Left colon (tissue), 2 donors: ENCODE measurements at regions of chr22 and their contacts with region 1.

Region 1: GRCh38 chr22:20867179-20868024 is 8.6 kb downstream of the SNAP29 start:
- DNase-seq: peak; percentile 57 to 78
- ATAC-seq: peak; percentile 94

Region 2: GRCh38 chr22:20916983-20917810 is 49.8 kb after region 1 on chr22 and contains the start of gene CRKL:
- intact Hi-C with region 1: loop called in 1 of 2 experiments (anchors 10 kb)
- DNase-seq: peak; percentile 96 to 97
- ATAC-seq: peak; percentile 88
- total RNA-seq, gene CRKL: 51.3 to 60.9 TPM

Region 3: DNA sequence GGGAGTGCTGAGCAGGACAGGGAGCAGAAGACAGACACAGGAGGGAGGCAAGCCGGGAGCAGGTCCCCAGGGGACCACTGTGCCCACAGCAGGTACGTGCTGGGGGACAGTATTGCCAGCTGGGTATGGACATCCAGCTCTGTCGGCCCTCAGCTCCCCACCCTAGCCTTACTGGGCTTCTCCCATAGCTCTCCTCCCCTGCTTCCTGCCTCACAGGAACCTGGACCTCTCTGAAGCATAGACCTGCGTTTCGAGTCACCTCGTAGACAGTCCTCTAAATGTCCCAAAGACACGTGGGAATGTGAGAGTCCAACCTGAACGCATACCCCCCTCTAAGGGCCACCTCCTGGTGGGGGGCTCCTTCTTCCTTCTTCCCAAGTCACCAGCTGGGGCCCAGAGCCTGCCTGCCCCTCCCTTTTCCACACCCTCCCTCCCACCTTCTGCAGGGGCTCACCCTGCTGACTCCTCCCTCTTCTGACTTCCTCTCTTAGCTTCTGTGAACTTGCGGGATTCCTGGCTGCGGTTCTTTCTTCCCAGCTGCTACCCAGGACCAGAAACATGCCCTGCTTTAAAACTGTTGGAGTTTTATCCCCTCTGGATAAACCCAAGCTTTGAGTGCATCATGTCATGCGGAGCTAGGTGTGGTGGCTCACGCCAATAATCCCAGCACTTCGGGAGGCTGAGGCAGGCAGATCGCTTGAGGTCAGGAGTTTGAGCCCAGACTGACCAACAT is 188.4 kb after region 1 on chr22:
- intact Hi-C with region 1: no loop called
- DNase-seq: no peak
- ATAC-seq: no peak